Posterior vena cava (tissue), 2 donors: ENCODE measurements at regions of chrX and their contacts with region 1.

Region 1: DNA sequence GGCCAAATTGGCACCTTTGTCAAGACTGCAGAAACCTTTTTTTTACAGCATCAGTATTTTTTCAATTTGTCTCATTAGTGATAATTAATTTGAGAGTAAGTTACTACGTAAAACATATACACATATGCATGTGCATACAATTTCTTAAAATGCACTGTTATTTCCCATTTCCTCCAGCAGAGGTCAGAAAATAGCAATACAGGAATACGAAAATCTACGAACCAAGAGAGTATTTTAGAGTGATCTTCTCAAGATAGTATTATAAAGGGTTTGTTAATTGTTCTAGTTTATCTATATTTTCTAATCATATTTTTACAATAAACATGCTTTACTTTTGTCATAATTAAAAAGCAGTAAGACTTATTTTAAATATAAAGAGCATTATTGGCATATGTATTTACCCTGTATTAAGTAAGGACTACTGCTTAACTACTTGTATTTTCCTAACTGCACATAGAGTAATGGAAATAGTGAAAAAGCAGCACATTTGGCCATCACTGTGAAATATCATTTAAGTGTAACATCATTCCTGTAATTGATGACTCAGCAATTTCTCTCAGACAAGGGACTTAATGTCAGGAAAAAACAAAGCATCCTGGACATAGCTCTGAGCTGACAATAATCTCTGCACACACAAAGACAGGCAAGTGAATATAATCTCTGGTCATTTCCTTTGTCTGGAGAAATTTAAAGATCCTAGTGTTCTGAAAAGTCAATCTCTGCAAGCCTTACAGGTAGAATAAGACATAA is 45.6 kb downstream of the MAOB start:
- DNase-seq: no peak

Region 2: DNA sequence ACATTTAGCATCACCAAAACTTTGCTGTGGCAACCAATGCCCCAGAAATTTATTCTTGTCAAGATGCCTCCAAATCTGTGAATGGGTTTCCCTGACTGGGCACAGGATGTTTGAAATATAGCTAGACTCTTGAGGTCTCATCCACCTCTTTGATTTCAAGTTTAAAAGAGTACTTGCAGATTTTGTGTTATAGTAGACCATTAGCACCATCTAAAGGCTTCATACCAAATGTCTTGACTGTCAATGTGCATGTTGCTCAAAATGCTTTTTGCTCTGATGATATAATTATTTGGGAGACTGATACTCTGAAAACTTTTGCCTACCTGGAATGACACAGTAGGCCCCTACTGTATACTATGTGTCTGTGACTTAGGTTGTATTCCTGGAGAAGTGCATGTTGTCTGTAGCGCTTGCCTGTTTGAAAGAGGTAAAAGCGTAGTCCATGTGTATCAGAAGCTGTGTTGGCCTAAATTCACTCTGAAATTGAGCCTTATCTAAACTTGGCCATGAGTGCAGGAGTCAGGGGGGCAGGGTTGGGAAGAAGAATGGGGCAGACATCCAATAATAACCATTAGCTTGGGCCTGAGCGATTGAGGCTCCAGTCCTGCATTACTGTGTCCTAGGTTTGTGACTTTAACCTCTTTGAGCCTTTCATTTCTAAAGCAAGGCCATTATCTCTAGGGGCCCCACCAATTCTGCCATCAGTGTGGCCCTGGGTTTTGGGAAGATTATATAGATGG is 102.7 kb after region 1 on chrX:
- intact Hi-C with region 1: loop called in 1 of 2 experiments (anchors 10 kb)
- DNase-seq: no peak